ENCODE measurements at regions of chr2 and their contacts with region 1.

Region 1: GRCh38 chr2:198296665-198297308 is 492.4 kb downstream of the PLCL1 start:
- DNase-seq: peak; percentile 71
- H3K4me3 Mint-ChIP-seq: no peak overlapping the region
- H3K27ac Mint-ChIP-seq: no peak overlapping the region
- H3K4me1 Mint-ChIP-seq: no peaks in the 10 kb centered on the region
- H3K27me3 Mint-ChIP-seq: peaks cover 32% of the 10 kb centered on the region
- CTCF ChIP-seq: peak; percentile 77

Region 2: GRCh38 chr2:197804049-197804757 is 492.6 kb before region 1 on chr2 and contains the start of gene PLCL1:
- CTCF ChIA-PET with region 1: interaction called, 24 read pairs
- POLR2A ChIA-PET with region 1: no interaction called
- intact Hi-C with region 1: loop called (anchors 1 kb)
- DNase-seq: peak; percentile 92
- H3K4me3 Mint-ChIP-seq: peak within 1 kb of the TSS; percentile 74
- H3K27ac Mint-ChIP-seq: peak within 1 kb of the TSS; percentile 73
- H3K4me1 Mint-ChIP-seq: peaks cover 6% of the 10 kb centered on the region
- H3K27me3 Mint-ChIP-seq: peaks cover 18% of the 10 kb centered on the region
- CTCF ChIP-seq: no peak
- total RNA-seq, gene PLCL1: 0.12 and 0.22 TPM in 2 replicates

Region 3: DNA sequence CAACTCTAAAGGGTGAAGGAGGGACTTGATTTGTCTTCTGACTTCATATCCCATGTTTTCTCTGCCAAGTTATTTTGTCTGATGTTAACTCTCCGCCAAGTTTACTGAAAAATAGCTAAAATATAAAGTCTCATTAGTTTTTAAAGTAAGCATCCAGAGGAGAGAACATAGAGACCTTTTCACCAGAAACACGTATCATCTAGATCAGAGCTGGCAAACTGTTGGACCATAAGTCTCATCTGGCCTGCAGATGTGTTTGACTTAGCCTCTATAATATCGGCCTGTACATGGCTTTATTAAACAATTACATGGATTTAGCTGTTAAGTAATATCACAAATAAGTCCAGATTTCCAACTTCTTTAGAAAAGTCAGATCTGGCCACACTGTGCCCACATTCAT is 309.8 kb before region 1 on chr2:
- CTCF ChIA-PET with region 1: interaction called, 14 read pairs
- POLR2A ChIA-PET with region 1: no interaction called
- intact Hi-C with region 1: loop called (anchors 10 kb)
- DNase-seq: no peak
- H3K4me3 Mint-ChIP-seq: no peak overlapping the region
- H3K27ac Mint-ChIP-seq: no peak overlapping the region
- H3K4me1 Mint-ChIP-seq: no peaks in the 10 kb centered on the region
- H3K27me3 Mint-ChIP-seq: no peaks in the 10 kb centered on the region
- CTCF ChIP-seq: no peak

Region 4: GRCh38 chr2:198173242-198173641 is 123.5 kb before region 1 on chr2:
- CTCF ChIA-PET with region 1: no interaction called
- POLR2A ChIA-PET with region 1: no interaction called
- intact Hi-C with region 1: no loop called
- DNase-seq: no peak
- H3K4me3 Mint-ChIP-seq: no peak overlapping the region
- H3K27ac Mint-ChIP-seq: no peak overlapping the region
- H3K4me1 Mint-ChIP-seq: no peaks in the 10 kb centered on the region
- H3K27me3 Mint-ChIP-seq: peaks cover 18% of the 10 kb centered on the region
- CTCF ChIP-seq: no peak

Region 5: DNA sequence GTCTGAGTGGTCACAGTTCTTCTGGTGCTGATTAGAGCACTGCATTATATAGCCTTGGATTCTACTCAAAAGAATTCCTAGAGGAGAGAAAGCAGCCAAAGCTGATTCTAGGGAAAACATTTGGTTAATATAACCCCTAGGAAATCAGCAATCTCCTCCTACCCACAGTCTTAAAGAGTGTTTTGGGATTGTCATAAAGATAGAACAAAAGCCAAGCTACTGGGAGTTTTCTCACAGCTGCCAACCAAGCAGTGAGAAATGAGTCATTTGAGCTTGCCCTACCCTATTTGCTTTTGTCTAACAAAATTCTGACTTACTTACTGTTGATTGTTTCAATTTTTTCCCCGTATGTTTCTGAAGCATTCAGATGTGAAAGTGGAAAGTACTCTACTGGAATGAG is 23.1 kb before region 1 on chr2:
- CTCF ChIA-PET with region 1: interaction called, 12 read pairs
- POLR2A ChIA-PET with region 1: no interaction called
- intact Hi-C with region 1: no loop called
- DNase-seq: peak; percentile 36
- H3K4me3 Mint-ChIP-seq: no peak overlapping the region
- H3K27ac Mint-ChIP-seq: no peak overlapping the region
- H3K4me1 Mint-ChIP-seq: no peaks in the 10 kb centered on the region
- H3K27me3 Mint-ChIP-seq: no peaks in the 10 kb centered on the region
- CTCF ChIP-seq: no peak

Region 6: GRCh38 chr2:198309673-198310280 is 13.0 kb after region 1 on chr2:
- CTCF ChIA-PET with region 1: interaction called, 19 read pairs
- POLR2A ChIA-PET with region 1: no interaction called
- intact Hi-C with region 1: no loop called
- DNase-seq: peak; percentile 65
- H3K4me3 Mint-ChIP-seq: no peak overlapping the region
- H3K27ac Mint-ChIP-seq: no peak overlapping the region
- H3K4me1 Mint-ChIP-seq: peaks cover 6% of the 10 kb centered on the region
- H3K27me3 Mint-ChIP-seq: peaks cover 60% of the 10 kb centered on the region
- CTCF ChIP-seq: peak; percentile 71

Measured in MCF 10A (cell line).